CD4-positive, alpha-beta memory T cell (primary cell): ENCODE measurements at regions of chr19 and their contacts with region 1.

Region 1: GRCh38 chr19:17114414-17114831 is 38.8 kb downstream of the MYO9B start:
- DNase-seq: no peak
- H3K4me3 ChIP-seq: no peak overlapping the region
- H3K4me3 Mint-ChIP-seq: no peak overlapping the region
- H3K27ac ChIP-seq: no peak overlapping the region
- H3K27ac Mint-ChIP-seq: peak overlapping the region in 2 of 7 donors; percentile 9 to 32
- H3K4me1 ChIP-seq: no peaks in the 10 kb centered on the region
- H3K4me1 Mint-ChIP-seq: peaks cover 8 to 36% (median 23%) of the 10 kb centered on the region in 4 donors
- H3K27me3 ChIP-seq: no peaks in the 10 kb centered on the region
- H3K27me3 Mint-ChIP-seq: no peaks in the 10 kb centered on the region

Region 2: GRCh38 chr19:17125715-17126677 is 11.6 kb after region 1 on chr19:
- CTCF ChIA-PET with region 1: no interaction called
- POLR2A ChIA-PET with region 1: interaction called, 14 read pairs
- intact Hi-C with region 1: no loop called
- DNase-seq: peak; percentile 82 to 91 (median 87)
- H3K4me3 ChIP-seq: peak overlapping the region; percentile 51 to 73
- H3K4me3 Mint-ChIP-seq: peak overlapping the region; percentile 79 to 93 (median 91)
- H3K27ac ChIP-seq: peak overlapping the region; percentile 76
- H3K27ac Mint-ChIP-seq: peak overlapping the region; percentile 97 to 99 (median 99)
- H3K4me1 ChIP-seq: peaks cover 52% of the 10 kb centered on the region
- H3K4me1 Mint-ChIP-seq: peaks cover 23 to 61% (median 40%) of the 10 kb centered on the region in 4 donors
- H3K27me3 ChIP-seq: no peaks in the 10 kb centered on the region
- H3K27me3 Mint-ChIP-seq: no peaks in the 10 kb centered on the region

Region 3: GRCh38 chr19:17136021-17136420 is 21.6 kb after region 1 on chr19:
- CTCF ChIA-PET with region 1: no interaction called
- POLR2A ChIA-PET with region 1: no interaction called
- intact Hi-C with region 1: no loop called
- DNase-seq: no peak
- H3K4me3 ChIP-seq: no peak overlapping the region
- H3K4me3 Mint-ChIP-seq: no peak overlapping the region
- H3K27ac ChIP-seq: no peak overlapping the region
- H3K27ac Mint-ChIP-seq: peak overlapping the region in 1 of 7 donors; percentile 69
- H3K4me1 ChIP-seq: no peaks in the 10 kb centered on the region
- H3K4me1 Mint-ChIP-seq: peaks cover 0 to 9% (median 2%) of the 10 kb centered on the region in 4 donors
- H3K27me3 ChIP-seq: no peaks in the 10 kb centered on the region
- H3K27me3 Mint-ChIP-seq: no peaks in the 10 kb centered on the region